Ascending aorta (tissue), 2 donors: ENCODE measurements at regions of chr2 and their contacts with region 1.

Region 1: GRCh38 chr2:121400201-121400600 is 115.2 kb upstream of the TFCP2L1 start:
- DNase-seq: no peak
- H3K4me3 ChIP-seq: no peak overlapping the region
- H3K27ac ChIP-seq: no peak overlapping the region
- H3K4me1 ChIP-seq: peaks cover 0 to 6% of the 10 kb centered on the region in 2 donors
- H3K27me3 ChIP-seq: no peaks in the 10 kb centered on the region
- CTCF ChIP-seq: no peak

Region 2: GRCh38 chr2:121519732-121520640 is 119.8 kb after region 1 on chr2:
- intact Hi-C with region 1: loop called (anchors 10 kb)
- DNase-seq: no peak
- H3K4me3 ChIP-seq: no peak overlapping the region
- H3K27ac ChIP-seq: no peak overlapping the region
- H3K4me1 ChIP-seq: peaks cover 0 to 2% of the 10 kb centered on the region in 2 donors
- H3K27me3 ChIP-seq: no peaks in the 10 kb centered on the region
- CTCF ChIP-seq: no peak

Region 3: DNA sequence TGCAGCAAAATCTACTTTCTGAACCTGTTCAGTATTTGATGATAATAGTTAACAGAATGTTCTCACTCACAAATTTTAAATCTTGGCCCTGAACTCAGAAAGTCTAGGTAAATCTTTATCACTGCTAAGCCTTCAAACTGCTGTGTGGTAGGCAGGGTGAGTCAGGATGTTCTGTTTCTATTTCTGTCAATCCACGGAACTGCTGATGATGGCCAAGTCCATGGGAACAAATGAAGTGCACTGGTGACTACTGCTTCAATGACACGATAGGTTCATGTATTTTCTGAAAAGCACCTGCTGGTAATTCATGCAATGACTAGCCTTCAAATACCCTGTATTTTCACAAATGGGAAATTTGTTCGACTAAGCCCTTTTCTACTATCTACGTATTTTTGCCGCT is 322.3 kb after region 1 on chr2:
- intact Hi-C with region 1: loop called (anchors 2 kb)
- DNase-seq: no peak
- H3K4me3 ChIP-seq: no peak overlapping the region
- H3K27ac ChIP-seq: peak overlapping the region; percentile 58 to 78
- H3K4me1 ChIP-seq: no peaks in the 10 kb centered on the region
- H3K27me3 ChIP-seq: no peaks in the 10 kb centered on the region
- CTCF ChIP-seq: no peak

Region 4: GRCh38 chr2:121755236-121756111 is 355.3 kb after region 1 on chr2 and contains the start of gene TSN:
- intact Hi-C with region 1: loop called (anchors 10 kb)
- DNase-seq: peak; percentile 87 to 98
- H3K4me3 ChIP-seq: peak within 1 kb of the TSS; percentile 90 to 94
- H3K27ac ChIP-seq: peak within 1 kb of the TSS; percentile 71 to 78
- H3K4me1 ChIP-seq: peaks cover 5 to 18% of the 10 kb centered on the region in 2 donors
- H3K27me3 ChIP-seq: no peaks in the 10 kb centered on the region
- CTCF ChIP-seq: peak in 1 of 3 experiments; percentile 4
- total RNA-seq, gene TSN: 42.6 TPM